ENCODE measurements at regions of chr6 and their contacts with region 1.

Region 1: DNA sequence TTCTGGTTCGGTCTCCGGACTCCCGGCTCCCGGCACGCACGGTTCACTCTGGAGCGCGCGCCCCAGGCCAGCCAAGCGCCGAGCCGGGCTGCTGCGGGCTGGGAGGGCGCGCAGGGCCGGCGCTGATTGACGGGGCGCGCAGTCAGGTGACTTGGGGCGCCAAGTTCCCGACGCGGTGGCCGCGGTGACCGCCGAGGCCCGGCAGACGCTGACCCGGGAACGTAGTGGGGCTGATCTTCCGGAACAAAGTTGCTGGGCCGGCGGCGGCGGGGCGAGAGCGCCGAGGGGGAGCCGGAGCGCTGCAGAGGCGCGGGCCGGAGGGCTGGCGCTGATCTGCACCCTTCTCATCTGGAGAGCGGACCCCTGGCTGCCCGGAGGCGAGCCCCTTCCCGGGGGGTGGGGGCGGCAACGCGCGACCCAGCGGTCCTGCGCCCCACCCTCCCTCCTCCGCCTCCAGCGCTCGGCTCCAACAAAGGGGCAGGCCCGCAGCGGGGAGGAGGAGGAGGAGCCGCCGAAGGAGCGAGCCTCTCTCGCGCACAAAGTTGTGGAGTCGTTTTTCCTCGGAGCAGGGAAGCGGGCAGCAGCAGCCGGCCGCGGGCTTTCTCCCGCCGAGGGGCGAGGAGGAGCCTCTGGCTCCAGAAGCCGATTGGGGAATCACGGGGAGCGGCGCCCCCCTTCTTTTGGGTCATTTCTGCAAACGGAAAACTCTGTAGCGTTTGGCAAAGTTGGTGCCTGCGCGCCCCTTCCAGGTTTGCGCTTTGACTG is at the start of gene UTRN:
- DNase-seq: peak; percentile 29
- H3K4me3 Mint-ChIP-seq: peak within 1 kb of the TSS; percentile 93
- H3K27ac Mint-ChIP-seq: peak within 1 kb of the TSS; percentile 64
- H3K4me1 Mint-ChIP-seq: peaks cover 19% of the 10 kb centered on the region
- H3K27me3 Mint-ChIP-seq: peaks cover 33% of the 10 kb centered on the region
- total RNA-seq, gene UTRN: 48.3 and 50.6 TPM in 2 replicates

Region 2: DNA sequence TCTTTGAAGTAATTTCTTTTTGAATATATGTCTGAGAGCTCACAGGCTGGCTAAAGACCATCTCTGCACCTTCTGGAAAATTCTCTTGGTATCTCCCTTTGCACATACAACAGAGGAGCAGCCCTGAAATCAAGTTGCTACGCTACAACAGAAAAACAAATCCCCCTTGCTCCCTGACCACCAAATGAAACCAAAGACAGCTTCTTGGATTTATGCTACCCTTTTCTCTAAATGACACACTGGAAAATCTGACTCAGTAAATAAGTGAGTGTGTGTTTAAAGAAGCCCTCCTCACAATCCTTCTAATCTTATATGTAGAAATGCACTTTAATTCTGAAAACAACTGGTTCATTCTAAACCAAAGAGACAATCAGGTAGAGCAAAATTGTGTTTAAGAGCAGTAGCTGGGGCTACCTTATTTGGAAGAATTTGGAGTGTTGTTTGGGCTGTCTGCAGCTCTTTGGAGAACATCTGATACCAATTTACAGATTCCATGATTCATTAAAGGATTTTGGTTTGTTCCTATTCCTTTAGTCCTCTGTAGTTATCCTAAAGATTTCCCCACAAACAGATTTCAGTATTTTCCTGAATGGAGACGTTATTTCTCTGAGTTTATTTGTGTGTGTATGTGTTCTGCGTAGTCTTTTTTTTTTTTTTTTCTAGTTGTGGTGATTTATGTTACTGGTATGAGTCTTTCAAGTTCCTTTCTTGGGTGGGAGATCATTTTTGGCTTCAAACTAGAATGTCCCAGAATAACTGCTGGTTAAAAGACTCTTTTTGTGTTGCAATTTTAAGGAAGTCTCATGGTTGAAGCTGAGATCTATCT is 36.3 kb before region 1 on chr6:
- intact Hi-C with region 1: loop called (anchors 1 kb)
- DNase-seq: no peak
- H3K4me3 Mint-ChIP-seq: no peak overlapping the region
- H3K27ac Mint-ChIP-seq: peak overlapping the region; percentile 57
- H3K4me1 Mint-ChIP-seq: peaks cover 26% of the 10 kb centered on the region
- H3K27me3 Mint-ChIP-seq: peaks cover 7% of the 10 kb centered on the region

Region 3: GRCh38 chr6:144334131-144334708 is 49.3 kb after region 1 on chr6:
- intact Hi-C with region 1: loop called (anchors 2 kb)
- DNase-seq: peak; percentile 50
- H3K4me3 Mint-ChIP-seq: peak overlapping the region; percentile 80
- H3K27ac Mint-ChIP-seq: peak overlapping the region; percentile 62
- H3K4me1 Mint-ChIP-seq: peaks cover 53% of the 10 kb centered on the region
- H3K27me3 Mint-ChIP-seq: no peaks in the 10 kb centered on the region

Region 4: GRCh38 chr6:144411332-144412190 is 126.6 kb after region 1 on chr6:
- intact Hi-C with region 1: loop called (anchors 5 kb)
- DNase-seq: no peak
- H3K4me3 Mint-ChIP-seq: peak overlapping the region; percentile 71
- H3K27ac Mint-ChIP-seq: peak overlapping the region; percentile 79
- H3K4me1 Mint-ChIP-seq: peaks cover 31% of the 10 kb centered on the region
- H3K27me3 Mint-ChIP-seq: no peaks in the 10 kb centered on the region

Region 5: GRCh38 chr6:144482142-144482541 is 197.2 kb after region 1 on chr6:
- intact Hi-C with region 1: loop called (anchors 1 kb)
- DNase-seq: peak; percentile 48
- H3K4me3 Mint-ChIP-seq: no peak overlapping the region
- H3K27ac Mint-ChIP-seq: no peak overlapping the region
- H3K4me1 Mint-ChIP-seq: peaks cover 15% of the 10 kb centered on the region
- H3K27me3 Mint-ChIP-seq: no peaks in the 10 kb centered on the region